ENCODE measurements at regions of chr4 and their contacts with region 1.

Region 1: DNA sequence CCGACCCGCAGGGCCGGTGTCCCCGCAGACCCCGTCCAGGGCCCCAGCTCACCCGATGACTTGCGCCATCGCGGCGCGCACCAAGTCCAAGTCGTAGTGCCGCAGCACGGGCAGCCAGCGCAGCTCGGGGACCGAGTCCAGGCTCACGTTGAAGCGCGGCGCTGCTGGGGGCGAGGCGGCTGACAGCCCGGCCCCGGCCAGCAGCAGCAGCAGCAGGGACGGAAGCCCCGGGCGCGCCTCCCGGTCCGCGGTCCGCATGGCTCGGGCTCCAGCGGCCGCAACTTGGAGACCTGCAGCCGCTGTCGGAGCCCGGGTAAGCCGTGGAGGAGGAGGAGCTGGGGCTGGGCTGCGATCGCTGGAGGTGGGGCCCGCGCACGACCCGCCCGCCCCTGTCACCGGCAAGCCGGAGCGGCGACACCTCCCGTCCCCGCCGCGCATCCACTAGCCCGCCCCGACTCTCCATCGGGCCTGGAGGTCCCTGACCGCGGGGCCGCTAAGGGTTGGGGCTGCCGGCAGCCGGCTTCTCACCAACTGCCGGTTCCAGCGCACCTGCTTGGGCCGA is at the start of gene NAAA:
- DNase-seq: peak; percentile 21 to 93
- H3K4me3 ChIP-seq: peak within 1 kb of the TSS; percentile 80 to 96
- H3K27ac ChIP-seq: peak within 1 kb of the TSS; percentile 69 to 80
- H3K4me1 ChIP-seq: peaks cover 8 to 9% of the 10 kb centered on the region in 2 donors
- H3K27me3 ChIP-seq: no peaks in the 10 kb centered on the region
- CTCF ChIP-seq: peak in 2 of 3 experiments; percentile 54 to 65
- total RNA-seq, gene NAAA: 287 TPM

Region 2: DNA sequence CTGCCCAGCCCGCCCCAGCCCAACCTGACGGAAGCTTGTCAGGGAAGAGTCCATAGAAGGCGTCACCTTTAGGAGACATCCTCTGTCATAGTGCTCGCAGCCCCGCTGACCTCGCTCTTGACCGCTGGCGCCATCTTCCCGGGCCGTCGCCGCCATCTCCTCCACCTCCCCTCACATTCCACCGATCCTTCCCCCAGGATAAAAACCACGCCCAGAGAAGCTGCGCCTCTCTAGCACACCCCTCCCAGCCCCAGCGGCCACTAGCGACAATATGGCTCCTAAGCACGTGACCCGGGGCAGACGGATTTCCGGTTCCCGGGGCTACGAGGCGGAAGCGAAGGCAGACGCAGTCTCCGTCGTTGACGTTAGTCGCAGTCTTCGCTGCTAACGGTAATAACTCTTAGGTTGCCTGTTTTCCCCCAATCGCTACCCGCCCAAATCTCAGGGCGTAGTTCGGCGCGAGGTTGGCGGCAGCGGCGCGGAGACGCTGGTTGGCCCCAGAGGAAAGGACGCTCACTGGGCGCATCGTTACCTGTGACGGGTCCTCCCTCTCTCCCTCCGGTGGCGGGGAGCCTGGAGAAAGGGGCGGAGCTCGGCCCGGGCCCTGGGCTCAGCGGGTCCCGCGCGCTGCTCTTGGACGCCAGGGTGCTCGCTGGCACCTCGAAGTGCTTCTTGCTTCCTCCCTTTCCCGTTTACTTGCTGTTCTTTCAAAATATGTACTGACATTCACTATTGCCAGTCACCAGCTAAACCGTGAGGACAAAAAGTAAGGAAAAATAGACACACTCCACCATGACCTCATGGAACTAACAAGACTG is 426.4 kb before region 1 on chr4 and contains the starts of genes RCHY1 and THAP6:
- intact Hi-C with region 1: loop called (anchors 5 kb)
- DNase-seq: peak; percentile 79 to 98
- H3K4me3 ChIP-seq: peak within 1 kb of the TSS; percentile 85 to 90
- H3K27ac ChIP-seq: peak within 1 kb of the TSS; percentile 92 to 95
- H3K4me1 ChIP-seq: peaks cover 8 to 32% of the 10 kb centered on the region in 2 donors
- H3K27me3 ChIP-seq: no peaks in the 10 kb centered on the region
- CTCF ChIP-seq: no peak
- total RNA-seq, gene RCHY1: 16.2 TPM
- total RNA-seq, gene THAP6: 2.4 TPM

Region 3: GRCh38 chr4:75769036-75769435 is 171.7 kb before region 1 on chr4:
- intact Hi-C with region 1: loop called (anchors 10 kb)
- DNase-seq: no peak
- H3K4me3 ChIP-seq: no peak overlapping the region
- H3K27ac ChIP-seq: peak overlapping the region in 1 of 2 donors; percentile 19
- H3K4me1 ChIP-seq: no peaks in the 10 kb centered on the region
- H3K27me3 ChIP-seq: no peaks in the 10 kb centered on the region
- CTCF ChIP-seq: no peak

Region 4: DNA sequence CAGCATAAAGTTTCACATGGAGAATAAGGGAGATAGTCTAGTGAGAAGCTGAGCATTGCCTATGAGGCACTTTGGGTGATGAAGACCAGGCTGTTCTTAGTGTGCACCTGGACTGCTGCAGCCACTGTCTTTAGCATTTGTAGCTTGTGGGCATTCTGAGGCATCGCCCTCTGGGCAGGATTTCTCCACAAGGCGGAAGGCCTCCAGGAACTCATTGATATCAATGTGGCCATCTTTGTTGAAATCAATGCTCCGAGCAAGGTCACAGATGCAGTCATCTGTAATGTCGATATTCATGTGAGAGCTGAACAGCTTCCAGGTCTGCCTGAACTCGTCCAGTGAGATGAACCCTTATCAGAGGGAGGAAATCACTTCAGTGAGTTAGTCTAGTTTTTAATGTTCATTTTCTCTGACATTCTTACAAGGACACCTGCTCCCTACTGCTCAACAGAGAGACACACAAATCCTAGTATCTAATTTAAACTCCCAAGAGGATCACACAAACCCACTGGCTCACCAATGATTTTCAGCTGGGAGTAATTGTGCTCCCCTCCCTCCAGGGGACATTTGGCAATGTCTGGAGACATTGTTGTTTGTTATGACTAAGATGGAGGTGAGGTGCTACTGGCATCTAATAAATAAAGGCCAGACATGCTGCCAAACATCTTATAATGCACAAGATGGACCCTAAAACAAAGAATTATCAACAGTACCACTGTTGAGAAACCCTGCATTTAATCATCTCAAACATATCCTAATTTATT is 80.0 kb before region 1 on chr4:
- intact Hi-C with region 1: no loop called
- DNase-seq: no peak
- H3K4me3 ChIP-seq: no peak overlapping the region
- H3K27ac ChIP-seq: no peak overlapping the region
- H3K4me1 ChIP-seq: no peaks in the 10 kb centered on the region
- H3K27me3 ChIP-seq: no peaks in the 10 kb centered on the region
- CTCF ChIP-seq: no peak

Region 5: DNA sequence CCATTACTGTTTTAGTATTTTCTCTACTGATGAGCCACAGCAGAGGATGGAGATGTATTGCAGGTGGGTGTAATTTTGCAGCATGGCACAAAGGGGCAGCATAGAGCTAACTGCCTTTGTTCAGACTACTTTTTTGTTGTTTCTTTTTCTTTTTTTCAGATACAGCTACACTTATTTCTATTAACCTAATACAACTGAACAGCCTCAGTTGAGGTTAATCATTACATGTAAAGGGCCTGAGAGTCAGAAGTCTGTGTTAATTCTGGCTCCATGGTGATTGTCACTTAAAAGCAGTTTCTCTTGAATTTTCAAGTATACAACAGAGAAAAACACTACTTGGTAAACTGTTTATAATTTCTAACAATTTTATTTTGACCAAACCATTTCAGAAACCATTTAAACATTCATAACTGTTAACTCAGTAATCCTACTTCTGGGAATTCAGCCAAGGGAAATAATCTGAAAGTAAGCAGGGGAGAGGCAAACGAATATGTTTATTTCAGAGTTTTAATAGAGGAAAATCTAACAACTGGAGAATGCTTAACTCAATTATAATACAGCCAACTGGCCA is 24.6 kb before region 1 on chr4:
- intact Hi-C with region 1: loop called (anchors 1 kb)
- DNase-seq: no peak
- H3K4me3 ChIP-seq: peak overlapping the region in 1 of 2 donors; percentile 5
- H3K27ac ChIP-seq: peak overlapping the region; percentile 36 to 62
- H3K4me1 ChIP-seq: peaks cover 0 to 5% of the 10 kb centered on the region in 2 donors
- H3K27me3 ChIP-seq: no peaks in the 10 kb centered on the region
- CTCF ChIP-seq: peak; percentile 14 to 70 (median 64)

Region 6: DNA sequence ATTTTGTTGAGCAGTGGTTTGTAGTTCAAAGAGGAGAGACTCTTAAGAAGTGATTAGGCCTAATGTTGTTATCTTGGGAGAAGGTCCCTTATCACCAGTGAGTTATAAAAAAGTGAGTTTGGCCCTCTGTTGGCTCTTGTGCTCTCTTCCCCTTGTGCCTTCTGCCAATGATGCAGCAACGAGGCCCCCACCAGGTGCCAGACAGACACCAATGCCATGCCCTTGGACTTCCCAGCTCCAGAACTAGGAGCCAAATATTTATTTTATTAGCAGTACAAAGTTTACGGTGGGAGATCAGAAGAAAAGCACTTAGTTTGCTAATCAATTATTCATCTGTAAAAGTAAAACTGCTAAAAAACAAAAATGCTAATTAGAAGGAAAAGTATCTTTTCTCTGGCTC is 22.8 kb after region 1 on chr4:
- intact Hi-C with region 1: no loop called
- DNase-seq: no peak
- H3K4me3 ChIP-seq: no peak overlapping the region
- H3K27ac ChIP-seq: no peak overlapping the region
- H3K4me1 ChIP-seq: no peaks in the 10 kb centered on the region
- H3K27me3 ChIP-seq: no peaks in the 10 kb centered on the region
- CTCF ChIP-seq: no peak

Region 7: GRCh38 chr4:75989846-75990528 is 49.2 kb after region 1 on chr4:
- intact Hi-C with region 1: loop called (anchors 2 kb)
- DNase-seq: no peak
- H3K4me3 ChIP-seq: peak overlapping the region; percentile 67 to 80
- H3K27ac ChIP-seq: peak overlapping the region; percentile 65 to 68
- H3K4me1 ChIP-seq: peaks cover 0 to 5% of the 10 kb centered on the region in 2 donors
- H3K27me3 ChIP-seq: no peaks in the 10 kb centered on the region
- CTCF ChIP-seq: no peak

Region 8: GRCh38 chr4:76090241-76090691 is 149.5 kb after region 1 on chr4:
- intact Hi-C with region 1: no loop called
- DNase-seq: peak in 1 of 2 donors; percentile 64
- H3K4me3 ChIP-seq: no peak overlapping the region
- H3K27ac ChIP-seq: no peak overlapping the region
- H3K4me1 ChIP-seq: no peaks in the 10 kb centered on the region
- H3K27me3 ChIP-seq: no peaks in the 10 kb centered on the region
- CTCF ChIP-seq: no peak

Measured in ascending aorta (tissue), 2 donors.